ENCODE measurements at regions of chr7 and their contacts with region 1.

Region 1: DNA sequence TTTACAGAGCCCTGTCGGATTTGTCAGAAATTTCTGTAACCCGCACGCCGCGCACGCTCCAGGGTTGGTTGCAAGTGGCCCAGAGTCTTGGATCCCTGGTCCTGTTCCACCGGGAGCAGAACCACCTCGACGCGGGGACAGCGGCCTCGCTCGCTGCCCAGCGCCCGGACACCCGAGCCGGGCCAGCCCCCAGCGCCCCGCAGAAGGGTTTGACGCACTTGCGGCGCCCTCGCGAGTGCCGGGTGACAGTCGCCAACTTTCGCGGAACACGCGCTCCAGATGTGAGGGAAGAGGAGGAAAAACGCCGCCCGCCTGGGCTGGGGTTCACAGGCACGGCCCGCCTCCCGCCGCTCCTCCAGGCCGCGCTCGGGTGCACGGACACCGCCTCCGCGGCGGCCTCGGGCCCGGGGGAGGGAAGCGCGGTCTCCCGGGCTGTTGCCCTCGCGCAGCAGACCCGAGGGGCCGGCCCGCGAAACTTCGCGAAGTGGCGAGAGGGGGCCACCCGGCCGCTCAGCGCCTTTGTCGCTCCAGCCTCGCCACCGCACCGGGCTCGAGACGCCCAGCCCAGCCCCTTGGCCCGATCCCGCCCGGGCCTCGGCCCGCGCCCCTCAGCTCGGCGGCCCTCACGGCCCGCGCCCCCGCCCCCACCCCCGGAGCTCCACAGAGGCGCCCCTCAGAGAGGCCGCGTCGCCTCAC is 514 bp downstream of the RNF216 start:
- DNase-seq: peak in 1 of 2 experiments; percentile 54
- H3K4me3 ChIP-seq: peak overlapping the region; percentile 76
- H3K27ac ChIP-seq: no peak overlapping the region
- H3K4me1 ChIP-seq: peaks cover 7% of the 10 kb centered on the region
- H3K27me3 ChIP-seq: no peaks in the 10 kb centered on the region
- CTCF ChIP-seq: no peak

Region 2: GRCh38 chr7:5132539-5132938 is 648.4 kb before region 1 on chr7:
- CTCF ChIA-PET with region 1: no interaction called
- POLR2A ChIA-PET with region 1: no interaction called
- intact Hi-C with region 1: no loop called
- DNase-seq: no peak
- H3K4me3 ChIP-seq: no peak overlapping the region
- H3K27ac ChIP-seq: no peak overlapping the region
- H3K4me1 ChIP-seq: no peaks in the 10 kb centered on the region
- H3K27me3 ChIP-seq: peaks cover 39% of the 10 kb centered on the region
- CTCF ChIP-seq: no peak

Region 3: GRCh38 chr7:5766321-5766761 is 14.6 kb before region 1 on chr7:
- CTCF ChIA-PET with region 1: interaction called, 15 read pairs
- POLR2A ChIA-PET with region 1: no interaction called
- intact Hi-C with region 1: no loop called
- DNase-seq: no peak
- H3K4me3 ChIP-seq: no peak overlapping the region
- H3K27ac ChIP-seq: 0 out of 2 replicates have a peak overlapping the region, but pooled peaks have one; percentile 30
- H3K4me1 ChIP-seq: no peaks in the 10 kb centered on the region
- H3K27me3 ChIP-seq: no peaks in the 10 kb centered on the region
- CTCF ChIP-seq: no peak

Region 4: GRCh38 chr7:5792268-5792667 is 11.3 kb after region 1 on chr7:
- CTCF ChIA-PET with region 1: interaction called, 11 read pairs
- POLR2A ChIA-PET with region 1: no interaction called
- intact Hi-C with region 1: no loop called
- DNase-seq: no peak
- H3K4me3 ChIP-seq: no peak overlapping the region
- H3K27ac ChIP-seq: no peak overlapping the region
- H3K4me1 ChIP-seq: no peaks in the 10 kb centered on the region
- H3K27me3 ChIP-seq: no peaks in the 10 kb centered on the region
- CTCF ChIP-seq: no peak

Region 5: GRCh38 chr7:5822742-5823503 is 42.0 kb after region 1 on chr7:
- CTCF ChIA-PET with region 1: interaction called, 9 read pairs
- POLR2A ChIA-PET with region 1: interaction called, 8 read pairs
- intact Hi-C with region 1: loop called (anchors 2 kb)
- DNase-seq: peak; percentile 91 to 98
- H3K4me3 ChIP-seq: peak overlapping the region; percentile 87
- H3K27ac ChIP-seq: peak overlapping the region; percentile 78
- H3K4me1 ChIP-seq: peaks cover 18% of the 10 kb centered on the region
- H3K27me3 ChIP-seq: no peaks in the 10 kb centered on the region
- CTCF ChIP-seq: no peak

Region 6: GRCh38 chr7:6299774-6300173 is 518.8 kb after region 1 on chr7:
- CTCF ChIA-PET with region 1: no interaction called
- POLR2A ChIA-PET with region 1: interaction called, 11 read pairs
- intact Hi-C with region 1: no loop called
- DNase-seq: no peak
- H3K4me3 ChIP-seq: no peak overlapping the region
- H3K27ac ChIP-seq: no peak overlapping the region
- H3K4me1 ChIP-seq: no peaks in the 10 kb centered on the region
- H3K27me3 ChIP-seq: no peaks in the 10 kb centered on the region
- CTCF ChIP-seq: no peak

Region 7: GRCh38 chr7:6367701-6368211 is 586.8 kb after region 1 on chr7:
- CTCF ChIA-PET with region 1: no interaction called
- POLR2A ChIA-PET with region 1: interaction called, 19 read pairs
- intact Hi-C with region 1: no loop called
- DNase-seq: peak in 1 of 2 experiments; percentile 63
- H3K4me3 ChIP-seq: no peak overlapping the region
- H3K27ac ChIP-seq: peak overlapping the region; percentile 18; the same call in 1 of the 2 replicates
- H3K4me1 ChIP-seq: peaks cover 10% of the 10 kb centered on the region
- H3K27me3 ChIP-seq: no peaks in the 10 kb centered on the region
- CTCF ChIP-seq: no peak

Measured in PC-9 (cell line).